Mammary epithelial cell (primary cell): ENCODE measurements at regions of chr9 and their contacts with region 1.

Region 1: DNA sequence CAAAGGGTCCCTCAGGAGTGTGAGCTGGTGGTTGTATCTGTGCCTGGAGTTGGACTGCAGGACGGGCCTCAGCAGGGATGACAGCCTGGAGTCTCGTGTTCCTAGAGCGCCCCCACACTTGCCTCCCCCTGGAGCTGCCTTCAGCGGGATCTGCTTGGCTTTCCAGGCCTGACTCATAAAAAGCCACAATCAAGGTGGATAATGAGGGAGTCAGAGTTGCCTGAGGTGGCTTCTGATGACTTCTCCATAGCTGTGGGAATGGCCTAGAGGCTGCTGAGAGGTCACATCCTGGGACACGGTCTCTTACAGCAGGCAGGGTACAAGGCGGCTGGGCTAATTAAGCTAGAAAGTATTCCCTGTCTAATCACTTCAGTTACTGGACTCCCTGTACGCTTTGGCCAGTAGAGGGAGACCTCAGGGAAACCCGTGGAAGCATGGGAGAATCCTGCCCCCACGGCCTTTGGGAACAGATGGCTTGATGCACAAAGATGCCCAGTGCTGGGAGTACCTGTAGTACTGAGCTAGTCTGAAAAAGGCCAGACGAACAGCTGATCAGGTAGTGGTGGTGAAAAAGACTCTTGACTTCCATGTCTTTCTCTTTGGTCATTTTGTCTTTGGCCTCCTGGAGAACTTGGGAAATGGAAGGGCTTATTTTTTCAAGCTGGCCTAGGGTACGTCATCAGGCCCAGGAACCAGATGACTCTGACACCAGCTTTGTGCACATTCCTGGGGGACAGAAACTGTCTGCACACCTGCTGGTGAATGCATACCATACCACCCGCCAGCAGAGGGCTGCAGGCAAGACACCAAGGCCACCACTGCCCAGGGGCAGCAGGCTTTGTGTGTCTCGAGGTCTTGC is 16.1 kb upstream of the FRRS1L start:
- DNase-seq: peak; percentile 60
- H3K4me3 ChIP-seq: no peak overlapping the region
- H3K27ac ChIP-seq: no peak overlapping the region
- H3K4me1 ChIP-seq: peaks cover 9% of the 10 kb centered on the region
- H3K27me3 ChIP-seq: no peaks in the 10 kb centered on the region
- CTCF ChIP-seq: peak; percentile 39 to 69

Region 2: DNA sequence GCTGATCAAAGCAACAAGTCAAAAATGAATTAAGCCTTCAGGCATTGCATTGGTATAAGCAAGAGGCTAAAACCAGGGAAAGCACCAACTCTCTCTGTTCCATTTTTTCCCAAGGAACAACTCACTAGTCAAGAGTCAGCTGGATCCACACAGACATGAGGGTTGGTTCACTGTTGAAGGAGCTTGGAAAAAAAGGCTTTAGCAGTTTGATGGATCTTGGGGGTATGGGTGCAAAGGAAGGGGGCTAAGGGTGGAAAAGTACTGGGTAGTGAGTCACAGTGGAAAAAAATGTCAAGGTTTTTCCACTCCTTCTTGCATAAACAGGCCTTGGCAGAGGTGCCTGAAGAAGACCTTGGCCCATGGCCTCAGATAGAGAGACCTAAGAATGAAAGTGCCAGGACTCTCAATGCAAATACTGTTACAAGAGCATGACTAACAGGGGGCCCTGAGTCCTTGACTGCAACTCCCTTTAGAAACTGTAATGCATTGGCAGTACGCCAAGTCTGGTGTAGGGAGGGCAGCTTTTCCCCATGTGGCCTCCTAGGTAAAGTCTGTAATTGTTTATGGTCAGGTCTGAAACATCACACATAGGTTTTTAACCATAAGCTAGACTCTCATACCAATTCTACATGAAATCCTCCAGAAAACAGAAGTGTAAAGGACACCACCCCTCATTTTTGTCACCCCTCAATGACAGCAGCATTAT is 297.4 kb before region 1 on chr9:
- CTCF ChIA-PET with region 1: interaction called, 11 read pairs
- dilution Hi-C with region 1: no loop called
- in situ Hi-C with region 1: no loop called
- intact Hi-C with region 1: no loop called
- DNase-seq: peak; percentile 80
- H3K4me3 ChIP-seq: no peak overlapping the region
- H3K27ac ChIP-seq: peak overlapping the region; percentile 5
- H3K4me1 ChIP-seq: peaks cover 10% of the 10 kb centered on the region
- H3K27me3 ChIP-seq: no peaks in the 10 kb centered on the region
- CTCF ChIP-seq: no peak

Region 3: DNA sequence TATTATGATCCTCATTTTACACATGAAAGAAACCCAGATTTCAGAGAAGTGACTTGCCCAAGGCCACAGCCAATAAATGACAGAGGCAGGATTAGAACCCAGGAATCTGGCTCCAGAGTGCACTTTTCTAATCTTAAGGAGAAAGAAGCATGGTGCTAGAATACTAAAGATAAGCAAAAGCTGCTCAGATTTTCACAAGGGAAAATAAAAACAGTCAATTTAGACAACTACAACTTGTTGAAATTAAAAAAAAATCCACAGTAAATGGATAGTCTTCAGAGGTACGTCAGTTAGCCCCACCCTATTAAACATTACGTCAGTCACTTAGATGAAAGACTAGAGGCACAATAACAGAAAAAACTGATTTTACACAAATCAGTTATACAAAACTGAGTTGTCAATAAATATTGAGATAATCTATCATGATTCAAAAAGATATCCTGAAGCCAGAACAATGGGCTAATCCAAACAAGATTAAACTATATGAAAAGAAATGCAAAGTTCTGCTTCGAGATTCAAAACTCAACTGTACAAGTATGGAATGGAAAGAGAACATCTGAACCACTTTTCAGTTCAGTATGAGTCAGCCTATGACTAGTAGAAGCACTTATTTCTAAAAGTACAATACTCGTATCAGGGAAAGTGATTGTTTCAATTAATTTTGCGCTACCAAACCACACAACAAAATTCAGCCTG is 72.7 kb before region 1 on chr9:
- CTCF ChIA-PET with region 1: no interaction called
- dilution Hi-C with region 1: no loop called
- in situ Hi-C with region 1: no loop called
- intact Hi-C with region 1: no loop called
- DNase-seq: peak; percentile 77
- H3K4me3 ChIP-seq: peak overlapping the region in 2 of 3 experiments; percentile 17 to 28
- H3K27ac ChIP-seq: peak overlapping the region; percentile 93
- H3K4me1 ChIP-seq: peaks cover 43% of the 10 kb centered on the region
- H3K27me3 ChIP-seq: no peaks in the 10 kb centered on the region
- CTCF ChIP-seq: no peak

Region 4: DNA sequence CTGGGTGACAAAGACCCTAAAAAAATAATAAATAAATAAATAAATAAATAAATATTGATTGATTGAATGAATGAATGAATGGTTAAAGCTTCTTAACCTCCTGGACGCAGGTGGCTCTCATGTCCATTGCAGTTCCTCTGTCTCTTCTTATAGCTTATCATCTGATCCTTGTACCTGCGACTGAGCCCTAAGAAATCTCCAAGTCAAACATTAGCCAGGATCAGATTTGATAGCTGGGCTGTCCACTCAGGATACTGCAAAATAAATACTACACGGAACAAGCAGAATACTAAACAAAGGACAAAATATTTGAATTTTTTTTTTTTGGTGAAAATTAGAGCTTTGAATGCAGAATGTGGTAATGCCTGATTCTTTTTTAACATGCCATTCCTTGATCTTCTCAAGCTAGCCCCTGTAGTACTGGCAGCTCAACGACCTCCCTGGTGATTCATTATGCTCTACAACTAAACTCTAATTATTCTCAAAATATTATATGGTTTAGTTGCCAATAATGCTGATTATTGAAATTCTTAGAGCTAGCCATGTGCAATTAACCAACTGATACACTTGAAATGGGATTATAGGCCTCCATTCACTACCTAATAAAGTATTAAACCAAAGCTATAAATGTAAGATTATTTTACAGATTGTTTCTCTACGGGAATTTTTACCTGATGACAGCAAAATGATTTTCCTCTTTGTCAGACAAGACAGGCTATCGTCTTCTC is 53.5 kb before region 1 on chr9:
- CTCF ChIA-PET with region 1: no interaction called
- dilution Hi-C with region 1: loop called (anchors 5 kb)
- in situ Hi-C with region 1: no loop called
- intact Hi-C with region 1: no loop called
- DNase-seq: no peak
- H3K4me3 ChIP-seq: no peak overlapping the region
- H3K27ac ChIP-seq: no peak overlapping the region
- H3K4me1 ChIP-seq: no peaks in the 10 kb centered on the region
- H3K27me3 ChIP-seq: no peaks in the 10 kb centered on the region
- CTCF ChIP-seq: no peak

Region 5: DNA sequence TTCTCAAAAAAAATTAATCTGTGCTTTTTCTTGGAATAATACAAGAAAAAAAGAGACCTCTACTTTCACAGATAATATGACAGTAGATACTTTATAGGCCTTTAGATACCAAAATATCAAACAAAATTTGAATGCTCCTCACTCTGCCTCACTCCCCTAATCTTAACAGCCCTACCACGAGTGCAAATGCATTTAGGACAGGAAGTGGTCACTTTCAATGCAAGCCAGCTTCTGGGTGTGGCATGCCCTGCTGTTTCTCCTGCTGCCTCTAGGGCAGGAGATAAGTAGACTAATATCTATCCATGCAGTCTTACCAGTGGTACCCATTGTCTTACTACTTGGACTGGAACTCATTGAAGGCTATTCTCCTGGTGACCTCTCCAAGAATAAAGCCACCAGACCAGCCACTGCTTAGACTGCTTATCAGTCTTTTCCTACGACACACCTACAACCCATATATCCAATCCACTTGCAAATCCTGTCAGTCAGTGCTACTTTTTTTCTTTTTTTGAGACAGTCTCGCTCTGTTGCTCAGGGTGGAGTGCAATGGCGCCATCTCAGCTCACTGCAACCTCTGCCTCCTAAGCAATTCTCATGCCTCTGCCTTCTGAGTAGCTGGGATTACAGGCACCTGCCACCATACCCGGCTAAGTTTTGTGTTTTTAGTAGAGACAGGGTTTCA is 39.1 kb before region 1 on chr9:
- CTCF ChIA-PET with region 1: no interaction called
- dilution Hi-C with region 1: no loop called
- in situ Hi-C with region 1: no loop called
- intact Hi-C with region 1: no loop called
- DNase-seq: peak; percentile 48
- H3K4me3 ChIP-seq: no peak overlapping the region
- H3K27ac ChIP-seq: no peak overlapping the region
- H3K4me1 ChIP-seq: peaks cover 5% of the 10 kb centered on the region
- H3K27me3 ChIP-seq: peaks cover 2% of the 10 kb centered on the region
- CTCF ChIP-seq: peak; percentile 53 to 64

Region 6: GRCh38 chr9:109381011-109381729 is 198.0 kb after region 1 on chr9:
- CTCF ChIA-PET with region 1: no interaction called
- dilution Hi-C with region 1: no loop called
- in situ Hi-C with region 1: loop called in 1 of 2 experiments (anchors 25 kb)
- intact Hi-C with region 1: no loop called
- DNase-seq: peak; percentile 43
- H3K4me3 ChIP-seq: no peak overlapping the region
- H3K27ac ChIP-seq: no peak overlapping the region
- H3K4me1 ChIP-seq: no peaks in the 10 kb centered on the region
- H3K27me3 ChIP-seq: no peaks in the 10 kb centered on the region
- CTCF ChIP-seq: no peak

Region 7: GRCh38 chr9:109401168-109401989 is 218.2 kb after region 1 on chr9:
- CTCF ChIA-PET with region 1: no interaction called
- dilution Hi-C with region 1: no loop called
- in situ Hi-C with region 1: loop called in 1 of 2 experiments (anchors 25 kb)
- intact Hi-C with region 1: loop called (anchors 2 kb)
- DNase-seq: peak; percentile 53
- H3K4me3 ChIP-seq: no peak overlapping the region
- H3K27ac ChIP-seq: no peak overlapping the region
- H3K4me1 ChIP-seq: no peaks in the 10 kb centered on the region
- H3K27me3 ChIP-seq: no peaks in the 10 kb centered on the region
- CTCF ChIP-seq: peak; percentile 88 to 94

Region 8: GRCh38 chr9:109520478-109521132 is 337.4 kb after region 1 on chr9:
- CTCF ChIA-PET with region 1: no interaction called
- dilution Hi-C with region 1: no loop called
- in situ Hi-C with region 1: no loop called
- intact Hi-C with region 1: loop called (anchors 5 kb)
- DNase-seq: peak; percentile 81
- H3K4me3 ChIP-seq: no peak overlapping the region
- H3K27ac ChIP-seq: peak overlapping the region; percentile 9
- H3K4me1 ChIP-seq: peaks cover 11% of the 10 kb centered on the region
- H3K27me3 ChIP-seq: no peaks in the 10 kb centered on the region
- CTCF ChIP-seq: peak; percentile 93 to 98